Activated CD4-positive, alpha-beta memory T cell treated with anti-CD3 and anti-CD28 coated beads for 36 hours (primary cell): ENCODE measurements at regions of chr20 and their contacts with region 1.

Region 1: DNA sequence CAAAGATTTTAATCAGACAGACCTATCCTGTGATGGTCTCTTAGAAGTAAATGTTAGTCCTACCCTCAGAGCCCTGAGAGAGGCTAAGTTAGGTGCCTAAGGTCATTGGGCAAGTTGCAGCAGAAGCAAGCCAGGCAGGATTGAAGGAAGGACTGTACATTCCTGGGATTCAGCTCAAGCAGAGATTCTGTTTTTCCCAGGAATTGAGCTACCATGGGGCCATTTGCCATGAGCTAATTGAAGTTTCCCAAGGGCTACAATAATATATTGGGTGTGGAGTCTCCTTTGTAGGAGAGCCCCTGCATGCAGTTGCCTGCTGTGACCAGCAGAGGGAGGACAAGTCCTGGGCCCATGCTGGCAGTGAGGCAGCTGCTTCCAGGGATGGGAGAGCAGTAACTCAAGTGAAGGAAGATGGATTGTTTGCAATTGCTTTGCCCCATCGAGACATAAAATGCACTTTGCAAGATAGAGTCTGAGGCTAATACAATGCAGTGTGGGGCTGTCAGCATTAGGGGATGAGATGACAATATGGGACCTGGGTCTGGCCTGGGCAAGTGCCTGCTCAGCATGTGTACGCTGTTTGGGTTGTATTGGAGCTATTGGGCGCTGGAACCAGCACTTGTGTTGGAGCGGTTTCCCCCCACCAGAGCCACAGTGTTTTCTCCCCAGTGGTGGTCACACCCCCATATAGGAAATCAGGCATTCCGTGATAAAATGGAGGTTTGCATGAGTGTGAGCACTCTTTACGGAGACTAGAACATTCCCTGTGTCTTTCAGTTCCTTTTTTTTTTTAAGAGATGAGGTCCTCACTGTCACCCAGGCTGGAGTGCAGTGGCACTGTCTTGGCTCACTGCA is 27.9 kb downstream of the DNMT3B start:
- DNase-seq: peak; percentile 79
- H3K4me3 Mint-ChIP-seq: no peak overlapping the region
- H3K27ac Mint-ChIP-seq: no peak overlapping the region
- H3K4me1 Mint-ChIP-seq: peaks cover 31% of the 10 kb centered on the region
- H3K27me3 Mint-ChIP-seq: no peaks in the 10 kb centered on the region

Region 2: DNA sequence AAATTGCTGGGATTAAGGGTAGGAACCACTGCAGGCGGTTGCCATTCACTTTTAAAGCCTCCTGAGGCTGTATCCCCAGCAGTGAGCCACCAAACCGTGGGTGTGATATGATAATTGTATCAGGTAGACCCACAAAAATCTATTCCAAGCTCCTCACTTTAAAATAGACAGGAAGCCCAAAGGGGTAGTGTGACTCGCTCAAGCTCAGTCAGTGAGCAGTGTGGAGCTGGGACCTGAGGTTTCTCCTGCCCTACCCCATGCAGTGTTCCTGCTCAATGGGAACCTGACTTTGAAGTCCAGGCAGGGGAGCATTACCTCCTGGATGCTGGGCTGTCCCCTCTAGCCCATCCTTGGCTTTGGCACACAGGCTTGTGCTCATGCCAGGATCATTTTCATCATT is 14.7 kb after region 1 on chr20:
- CTCF ChIA-PET with region 1: interaction called, 16 read pairs
- POLR2A ChIA-PET with region 1: no interaction called
- intact Hi-C with region 1: no loop called
- DNase-seq: no peak
- H3K4me3 Mint-ChIP-seq: no peak overlapping the region
- H3K27ac Mint-ChIP-seq: no peak overlapping the region
- H3K4me1 Mint-ChIP-seq: no peaks in the 10 kb centered on the region
- H3K27me3 Mint-ChIP-seq: no peaks in the 10 kb centered on the region

Region 3: DNA sequence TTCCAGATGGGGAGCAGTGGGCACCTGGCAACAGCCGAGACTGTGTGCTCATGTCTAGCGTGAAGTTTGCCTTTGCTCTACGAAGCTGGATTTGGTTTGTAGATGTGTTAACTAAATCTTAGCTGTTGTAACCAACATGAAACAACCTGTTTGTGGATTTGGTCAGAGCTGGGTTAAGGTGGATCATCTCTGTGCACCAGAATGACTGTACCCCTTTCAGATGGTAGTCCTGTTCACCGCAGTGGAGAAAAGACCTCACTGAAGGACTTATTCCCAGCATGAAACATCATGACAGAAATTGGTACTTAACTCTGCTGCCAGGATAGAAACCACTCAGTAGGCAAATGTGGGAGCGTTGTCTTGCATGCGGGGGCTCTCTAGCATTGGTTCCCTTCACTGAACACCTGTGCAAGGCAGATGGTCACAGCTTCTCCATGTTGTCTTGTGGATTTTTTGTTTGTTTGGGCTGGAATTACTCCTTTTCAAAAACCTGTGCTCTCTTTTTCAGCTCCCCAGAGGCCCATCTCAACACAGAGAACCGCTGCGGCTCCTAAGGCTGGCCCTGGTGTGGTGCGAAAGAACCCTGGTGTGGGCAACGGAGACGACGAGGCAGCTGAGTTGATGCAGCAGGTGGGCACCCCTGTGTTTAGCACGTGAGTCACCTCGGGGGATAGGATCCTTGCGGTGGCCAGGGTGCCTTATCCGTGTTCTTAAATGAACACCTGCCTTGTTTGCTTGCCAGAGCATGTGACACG is 49.3 kb after region 1 on chr20:
- CTCF ChIA-PET with region 1: interaction called, 10 read pairs
- POLR2A ChIA-PET with region 1: no interaction called
- intact Hi-C with region 1: loop called (anchors 5 kb)
- DNase-seq: peak; percentile 56
- H3K4me3 Mint-ChIP-seq: no peak overlapping the region
- H3K27ac Mint-ChIP-seq: peak overlapping the region; percentile 84
- H3K4me1 Mint-ChIP-seq: peaks cover 40% of the 10 kb centered on the region
- H3K27me3 Mint-ChIP-seq: no peaks in the 10 kb centered on the region

Region 4: GRCh38 chr20:32858701-32859372 is 68.7 kb after region 1 on chr20 and contains the start of gene EFCAB8:
- CTCF ChIA-PET with region 1: no interaction called
- POLR2A ChIA-PET with region 1: no interaction called
- intact Hi-C with region 1: loop called (anchors 5 kb)
- DNase-seq: no peak
- H3K4me3 Mint-ChIP-seq: no peak within 1 kb of the TSS
- H3K27ac Mint-ChIP-seq: no peak within 1 kb of the TSS
- H3K4me1 Mint-ChIP-seq: peaks cover 18% of the 10 kb centered on the region
- H3K27me3 Mint-ChIP-seq: no peaks in the 10 kb centered on the region
- total RNA-seq, gene EFCAB8: 0.24 to 0.83 TPM

Region 5: GRCh38 chr20:32871627-32872160 is 81.6 kb after region 1 on chr20:
- CTCF ChIA-PET with region 1: no interaction called
- POLR2A ChIA-PET with region 1: no interaction called
- intact Hi-C with region 1: no loop called
- DNase-seq: no peak
- H3K4me3 Mint-ChIP-seq: no peak overlapping the region
- H3K27ac Mint-ChIP-seq: no peak overlapping the region
- H3K4me1 Mint-ChIP-seq: no peaks in the 10 kb centered on the region
- H3K27me3 Mint-ChIP-seq: no peaks in the 10 kb centered on the region

Region 6: DNA sequence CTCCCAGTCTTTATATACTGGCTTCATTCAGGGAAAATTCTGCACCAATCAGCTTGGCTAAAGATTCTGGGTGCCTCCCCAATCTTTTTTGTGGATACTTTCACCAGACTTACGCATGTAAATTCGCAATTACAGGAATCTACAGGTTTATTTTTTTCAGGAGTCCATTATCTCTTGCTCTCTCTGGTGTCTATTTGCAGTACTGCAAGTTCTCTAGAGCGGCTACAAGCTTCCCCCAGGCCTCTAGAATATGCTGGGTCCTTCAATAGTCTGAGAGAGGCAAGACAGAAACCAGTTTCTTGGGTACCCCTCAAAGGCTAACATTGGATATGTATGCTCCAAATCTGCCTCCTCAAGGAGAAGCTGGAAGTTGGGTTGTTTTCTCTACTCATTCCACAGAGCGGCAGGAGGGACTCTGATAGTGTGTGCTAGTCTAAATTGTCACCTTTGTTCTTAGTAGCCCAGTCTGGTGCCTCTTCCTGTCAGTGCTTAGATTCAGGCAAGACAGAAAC is 155.6 kb after region 1 on chr20:
- CTCF ChIA-PET with region 1: interaction called, 16 read pairs
- POLR2A ChIA-PET with region 1: no interaction called
- intact Hi-C with region 1: loop called (anchors 2 kb)
- DNase-seq: peak; percentile 32
- H3K4me3 Mint-ChIP-seq: peak overlapping the region; percentile 14
- H3K27ac Mint-ChIP-seq: peak overlapping the region; percentile 86
- H3K4me1 Mint-ChIP-seq: peaks cover 39% of the 10 kb centered on the region
- H3K27me3 Mint-ChIP-seq: no peaks in the 10 kb centered on the region

Region 7: GRCh38 chr20:33097001-33097400 is 306.9 kb after region 1 on chr20:
- CTCF ChIA-PET with region 1: interaction called, 7 read pairs
- POLR2A ChIA-PET with region 1: no interaction called
- intact Hi-C with region 1: loop called (anchors 1 kb)
- DNase-seq: no peak
- H3K4me3 Mint-ChIP-seq: no peak overlapping the region
- H3K27ac Mint-ChIP-seq: no peak overlapping the region
- H3K4me1 Mint-ChIP-seq: peaks cover 2% of the 10 kb centered on the region
- H3K27me3 Mint-ChIP-seq: no peaks in the 10 kb centered on the region